Mammary epithelial cell (primary cell): ENCODE measurements at regions of chr9 and their contacts with region 1.

Region 1: DNA sequence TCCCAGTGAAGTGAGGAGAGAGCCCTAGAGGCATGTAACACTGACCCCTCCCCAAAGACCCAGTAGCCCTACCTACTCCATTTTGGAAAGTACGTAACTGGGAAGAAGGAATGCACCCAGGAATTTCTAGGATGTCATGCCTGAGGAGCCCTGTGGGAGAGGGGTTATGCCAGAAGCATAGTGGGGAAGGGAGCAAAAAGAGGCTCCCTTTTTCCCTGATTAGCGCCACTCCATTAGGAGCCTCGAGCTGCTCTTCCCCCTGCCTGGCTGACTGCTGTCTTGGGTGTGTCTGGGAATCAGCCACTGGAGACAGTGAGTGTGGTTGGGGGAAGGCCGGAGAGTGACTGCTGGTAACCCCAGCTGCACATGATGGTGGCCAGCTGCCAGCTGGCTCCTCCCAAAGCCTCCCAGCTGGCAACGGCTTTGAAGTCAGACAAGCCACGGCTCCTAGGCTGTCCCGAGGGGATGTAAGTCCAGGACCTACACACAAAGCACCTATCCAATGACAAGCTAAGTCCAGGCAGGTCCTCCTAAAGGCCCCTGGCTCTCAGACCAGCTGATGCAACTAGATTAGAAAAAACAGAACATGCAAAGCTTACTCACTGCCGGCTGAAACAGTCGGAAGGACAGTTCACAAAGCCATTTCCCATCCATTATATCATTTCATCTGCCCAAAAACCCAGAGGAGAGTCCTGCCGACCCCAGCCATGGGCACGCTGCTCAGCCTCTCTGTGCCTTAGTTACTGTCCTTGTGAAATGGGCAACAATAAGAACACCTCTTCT is 136.6 kb upstream of the ABCA1 start:
- DNase-seq: peak; percentile 97
- H3K4me3 ChIP-seq: no peak overlapping the region
- H3K27ac ChIP-seq: peak overlapping the region; percentile 88
- H3K4me1 ChIP-seq: peaks cover 38% of the 10 kb centered on the region
- H3K27me3 ChIP-seq: no peaks in the 10 kb centered on the region
- CTCF ChIP-seq: no peak

Region 2: GRCh38 chr9:104944356-104944755 is 120.2 kb before region 1 on chr9:
- CTCF ChIA-PET with region 1: no interaction called
- dilution Hi-C with region 1: no loop called
- in situ Hi-C with region 1: no loop called
- intact Hi-C with region 1: no loop called
- DNase-seq: no peak
- H3K4me3 ChIP-seq: no peak overlapping the region
- H3K27ac ChIP-seq: no peak overlapping the region
- H3K4me1 ChIP-seq: no peaks in the 10 kb centered on the region
- H3K27me3 ChIP-seq: no peaks in the 10 kb centered on the region
- CTCF ChIP-seq: no peak

Region 3: DNA sequence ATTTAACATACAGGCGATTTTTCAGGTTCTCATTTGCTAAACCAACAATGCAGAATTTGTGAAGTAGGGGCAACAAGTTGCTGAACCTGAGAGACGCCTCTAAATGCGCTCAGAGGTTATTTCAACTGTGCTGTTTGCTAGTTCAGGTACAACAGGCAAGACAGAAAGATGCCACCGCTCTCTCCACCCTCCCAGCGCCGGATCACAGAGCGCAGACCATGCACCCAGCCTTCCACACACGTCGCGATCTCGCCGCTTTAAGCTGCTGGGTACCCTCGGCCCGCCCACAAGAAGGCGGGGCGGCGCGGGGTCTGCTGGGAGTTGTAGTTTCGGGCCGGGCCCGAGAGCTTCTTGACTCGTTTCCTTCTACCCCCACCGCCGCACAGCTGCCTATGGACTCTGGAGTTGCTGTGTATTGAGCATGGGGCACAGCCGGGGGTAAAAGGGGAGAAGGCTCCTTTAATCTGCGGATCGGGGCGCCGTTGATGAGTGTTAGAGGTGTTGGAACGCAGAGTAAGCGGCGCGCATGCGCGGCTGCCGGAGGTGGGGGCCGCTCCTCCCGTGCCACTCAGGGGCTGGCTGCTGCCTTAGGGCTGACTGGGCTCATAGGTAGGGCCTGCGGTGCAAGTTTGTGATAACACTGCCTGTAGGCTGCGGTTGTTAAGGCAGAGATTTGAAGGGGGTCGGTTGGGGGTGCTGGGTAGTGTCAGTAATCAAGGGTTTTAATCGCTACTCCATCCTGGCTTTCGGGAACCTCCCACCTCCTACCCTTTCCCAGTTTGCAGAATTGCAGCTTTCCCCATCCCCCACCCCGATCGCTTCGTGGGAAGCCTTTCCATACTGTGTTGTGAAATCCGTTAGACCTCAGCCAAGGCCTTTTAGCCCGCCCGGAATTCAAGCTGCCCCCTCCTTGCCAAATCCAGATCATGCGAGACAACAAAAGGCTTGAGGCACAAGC is 96.2 kb before region 1 on chr9:
- CTCF ChIA-PET with region 1: no interaction called
- dilution Hi-C with region 1: no loop called
- in situ Hi-C with region 1: no loop called
- intact Hi-C with region 1: loop called (anchors 5 kb)
- DNase-seq: peak; percentile 71
- H3K4me3 ChIP-seq: peak overlapping the region; percentile 63 to 93 (median 72)
- H3K27ac ChIP-seq: no peak overlapping the region
- H3K4me1 ChIP-seq: peaks cover 8% of the 10 kb centered on the region
- H3K27me3 ChIP-seq: no peaks in the 10 kb centered on the region
- CTCF ChIP-seq: no peak

Region 4: GRCh38 chr9:104991144-104991953 is 73.2 kb before region 1 on chr9:
- CTCF ChIA-PET with region 1: no interaction called
- dilution Hi-C with region 1: no loop called
- in situ Hi-C with region 1: no loop called
- intact Hi-C with region 1: loop called (anchors 2 kb)
- DNase-seq: peak; percentile 78
- H3K4me3 ChIP-seq: peak overlapping the region; percentile 52 to 61 (median 60)
- H3K27ac ChIP-seq: peak overlapping the region; percentile 48
- H3K4me1 ChIP-seq: peaks cover 13% of the 10 kb centered on the region
- H3K27me3 ChIP-seq: no peaks in the 10 kb centered on the region
- CTCF ChIP-seq: no peak

Region 5: GRCh38 chr9:105007143-105007542 is 57.4 kb before region 1 on chr9:
- CTCF ChIA-PET with region 1: no interaction called
- dilution Hi-C with region 1: no loop called
- in situ Hi-C with region 1: no loop called
- intact Hi-C with region 1: loop called (anchors 2 kb)
- DNase-seq: peak; percentile 89
- H3K4me3 ChIP-seq: no peak overlapping the region
- H3K27ac ChIP-seq: peak overlapping the region; percentile 26
- H3K4me1 ChIP-seq: peaks cover 15% of the 10 kb centered on the region
- H3K27me3 ChIP-seq: no peaks in the 10 kb centered on the region
- CTCF ChIP-seq: no peak

Region 6: GRCh38 chr9:105053209-105053652 is 11.3 kb before region 1 on chr9:
- CTCF ChIA-PET with region 1: no interaction called
- dilution Hi-C with region 1: no loop called
- in situ Hi-C with region 1: no loop called
- intact Hi-C with region 1: loop called (anchors 2 kb)
- DNase-seq: peak; percentile 92
- H3K4me3 ChIP-seq: no peak overlapping the region
- H3K27ac ChIP-seq: peak overlapping the region; percentile 46
- H3K4me1 ChIP-seq: peaks cover 30% of the 10 kb centered on the region
- H3K27me3 ChIP-seq: no peaks in the 10 kb centered on the region
- CTCF ChIP-seq: no peak

Region 7: GRCh38 chr9:105114964-105115728 is 50.6 kb after region 1 on chr9:
- CTCF ChIA-PET with region 1: no interaction called
- dilution Hi-C with region 1: no loop called
- in situ Hi-C with region 1: no loop called
- intact Hi-C with region 1: no loop called
- DNase-seq: no peak
- H3K4me3 ChIP-seq: no peak overlapping the region
- H3K27ac ChIP-seq: no peak overlapping the region
- H3K4me1 ChIP-seq: no peaks in the 10 kb centered on the region
- H3K27me3 ChIP-seq: no peaks in the 10 kb centered on the region
- CTCF ChIP-seq: no peak